Natural killer cell (primary cell): ENCODE measurements at regions of chr12 and their contacts with region 1.

Region 1: DNA sequence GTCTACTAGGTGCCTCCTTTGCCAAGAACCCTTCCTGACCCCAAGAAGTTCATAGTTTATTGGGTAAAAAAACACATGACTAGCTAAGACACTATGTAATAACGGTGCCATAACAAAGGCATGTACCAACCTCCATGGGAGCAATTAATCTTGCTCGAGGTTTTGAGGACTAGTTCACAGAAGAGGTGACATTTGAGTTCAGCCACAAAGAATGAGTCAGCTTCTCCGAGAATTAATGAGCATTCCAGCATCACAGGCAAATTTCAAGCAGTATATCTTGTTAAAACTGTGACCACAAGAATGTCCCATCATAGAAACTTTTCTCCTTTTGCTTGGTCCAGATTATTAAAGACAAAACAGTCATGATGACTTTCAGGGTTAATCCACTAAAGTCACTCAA is 113.0 kb upstream of the RAP1B start:
- DNase-seq: peak in 1 of 2 donors; percentile 25
- ATAC-seq: peak; percentile 68 to 90 (median 82)
- H3K4me3 ChIP-seq: no peak overlapping the region
- H3K4me3 Mint-ChIP-seq: peak overlapping the region; percentile 72
- H3K27ac ChIP-seq: no peak overlapping the region
- H3K27ac Mint-ChIP-seq: peak overlapping the region; percentile 84 to 90
- H3K4me1 ChIP-seq: no peaks in the 10 kb centered on the region
- H3K4me1 Mint-ChIP-seq: peaks cover 31 to 58% of the 10 kb centered on the region in 2 donors
- H3K27me3 ChIP-seq: no peaks in the 10 kb centered on the region
- H3K27me3 Mint-ChIP-seq: no peaks in the 10 kb centered on the region
- CTCF ChIP-seq: no peak

Region 2: DNA sequence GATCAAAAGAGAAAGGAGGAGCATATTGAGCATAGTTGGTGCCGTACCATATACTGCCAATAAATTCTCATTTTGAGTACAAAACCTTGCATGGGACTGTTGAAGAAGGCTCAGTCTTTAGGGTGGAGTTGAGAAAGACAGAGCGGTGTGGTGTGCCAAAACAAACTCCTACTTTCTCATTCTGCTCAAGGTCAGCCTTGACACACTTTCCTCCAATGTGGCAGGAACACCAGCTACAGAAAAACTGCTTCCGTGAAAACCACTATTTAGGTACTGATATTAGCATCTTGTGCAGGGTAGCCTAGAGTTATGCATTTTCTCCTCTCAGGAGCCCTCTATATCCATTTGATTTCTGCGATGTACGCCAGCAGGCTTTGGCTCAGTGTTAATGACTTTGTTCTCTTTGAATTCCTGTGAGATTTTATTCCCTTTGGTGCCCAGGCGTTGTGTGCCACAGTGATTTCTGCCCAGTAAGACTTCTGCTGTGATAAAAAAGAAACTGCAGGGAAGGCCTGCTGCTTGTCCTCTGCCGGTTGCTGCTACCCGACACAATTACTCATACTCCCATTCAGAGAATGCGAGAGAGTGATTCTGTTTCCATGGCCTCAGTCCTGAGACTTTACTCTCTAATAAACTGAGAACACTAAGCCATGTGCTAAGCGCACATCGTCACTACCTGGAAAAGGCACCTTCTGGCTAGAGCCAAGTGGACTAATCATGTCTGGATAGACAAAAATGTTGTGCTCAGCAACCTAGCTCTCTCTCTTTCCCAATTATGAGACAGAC is 77.3 kb before region 1 on chr12:
- intact Hi-C with region 1: loop called (anchors 5 kb)
- DNase-seq: peak in 1 of 2 donors; percentile 15
- ATAC-seq: peak; percentile 40 to 56 (median 40)
- H3K4me3 ChIP-seq: no peak overlapping the region
- H3K4me3 Mint-ChIP-seq: peak overlapping the region; percentile 78
- H3K27ac ChIP-seq: peak overlapping the region; percentile 75
- H3K27ac Mint-ChIP-seq: peak overlapping the region; percentile 88 to 91
- H3K4me1 ChIP-seq: peaks cover 57% of the 10 kb centered on the region
- H3K4me1 Mint-ChIP-seq: peaks cover 69 to 77% of the 10 kb centered on the region in 2 donors
- H3K27me3 ChIP-seq: no peaks in the 10 kb centered on the region
- H3K27me3 Mint-ChIP-seq: no peaks in the 10 kb centered on the region
- CTCF ChIP-seq: no peak

Region 3: GRCh38 chr12:68462803-68463202 is 34.9 kb before region 1 on chr12:
- intact Hi-C with region 1: loop called (anchors 5 kb)
- DNase-seq: peak in 1 of 2 donors; percentile 56
- ATAC-seq: peak; percentile 62 to 77 (median 76)
- H3K4me3 ChIP-seq: peak overlapping the region; percentile 37
- H3K4me3 Mint-ChIP-seq: peak overlapping the region; percentile 90
- H3K27ac ChIP-seq: peak overlapping the region; percentile 97
- H3K27ac Mint-ChIP-seq: peak overlapping the region; percentile 95 to 97
- H3K4me1 ChIP-seq: peaks cover 27% of the 10 kb centered on the region
- H3K4me1 Mint-ChIP-seq: peaks cover 29 to 34% of the 10 kb centered on the region in 2 donors
- H3K27me3 ChIP-seq: no peaks in the 10 kb centered on the region
- H3K27me3 Mint-ChIP-seq: no peaks in the 10 kb centered on the region
- CTCF ChIP-seq: no peak

Region 4: GRCh38 chr12:68807576-68808387 is 310.1 kb after region 1 on chr12 and contains the start of gene MDM2:
- intact Hi-C with region 1: no loop called
- DNase-seq: peak; percentile 99
- ATAC-seq: peak; percentile 88 to 97 (median 93)
- H3K4me3 ChIP-seq: peak within 1 kb of the TSS; percentile 94
- H3K4me3 Mint-ChIP-seq: peak within 1 kb of the TSS; percentile 91
- H3K27ac ChIP-seq: peak within 1 kb of the TSS; percentile 98
- H3K27ac Mint-ChIP-seq: peak within 1 kb of the TSS; percentile 96 to 97
- H3K4me1 ChIP-seq: peaks cover 18% of the 10 kb centered on the region
- H3K4me1 Mint-ChIP-seq: peaks cover 13 to 19% of the 10 kb centered on the region in 2 donors
- H3K27me3 ChIP-seq: no peaks in the 10 kb centered on the region
- H3K27me3 Mint-ChIP-seq: no peaks in the 10 kb centered on the region
- CTCF ChIP-seq: peak; percentile 75
- total RNA-seq, gene MDM2: 130 to 143 (median 132) TPM